Activated CD4-positive, alpha-beta memory T cell treated with anti-CD3 and anti-CD28 coated beads for 36 hours (primary cell): ENCODE measurements at regions of chr10 and their contacts with region 1.

Region 1: GRCh38 chr10:95430231-95430951 is 130.8 kb downstream of the SORBS1 start:
- DNase-seq: peak; percentile 58
- H3K4me3 Mint-ChIP-seq: no peak overlapping the region
- H3K27ac Mint-ChIP-seq: no peak overlapping the region
- H3K4me1 Mint-ChIP-seq: no peaks in the 10 kb centered on the region
- H3K27me3 Mint-ChIP-seq: no peaks in the 10 kb centered on the region

Region 2: GRCh38 chr10:95260397-95260881 is 170.0 kb before region 1 on chr10:
- CTCF ChIA-PET with region 1: no interaction called
- POLR2A ChIA-PET with region 1: no interaction called
- intact Hi-C with region 1: no loop called
- DNase-seq: no peak
- H3K4me3 Mint-ChIP-seq: no peak overlapping the region
- H3K27ac Mint-ChIP-seq: no peak overlapping the region
- H3K4me1 Mint-ChIP-seq: no peaks in the 10 kb centered on the region
- H3K27me3 Mint-ChIP-seq: no peaks in the 10 kb centered on the region

Region 3: DNA sequence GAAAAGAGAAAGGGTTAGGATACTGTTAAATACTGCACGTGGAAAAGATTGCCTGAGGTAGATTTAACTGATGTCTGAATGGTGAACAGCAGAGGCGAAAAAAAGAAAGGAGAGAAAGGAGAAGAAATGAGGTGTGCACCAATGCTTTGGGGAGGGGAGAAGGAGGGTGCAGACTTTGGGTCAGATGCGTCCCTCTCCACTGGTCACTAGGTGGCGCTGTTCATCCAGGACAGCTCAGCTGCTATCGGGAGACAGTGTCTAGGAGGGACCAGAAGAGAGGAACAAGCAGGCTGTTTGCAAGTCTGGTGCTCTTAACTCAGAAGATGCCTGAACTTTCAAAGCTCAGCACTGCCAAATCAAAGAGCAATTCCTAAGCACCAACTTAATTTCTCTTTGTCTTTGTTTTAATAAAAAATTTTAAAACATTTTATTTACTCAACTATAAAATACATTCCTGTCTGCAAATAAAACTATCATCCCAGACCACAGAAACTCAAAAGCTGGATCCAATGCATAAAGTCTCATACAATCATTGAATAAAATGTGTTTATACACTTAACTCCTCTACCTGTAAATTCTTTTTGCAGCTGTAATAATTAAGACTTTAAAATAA is 55.7 kb before region 1 on chr10:
- CTCF ChIA-PET with region 1: interaction called, 73 read pairs
- POLR2A ChIA-PET with region 1: no interaction called
- intact Hi-C with region 1: loop called (anchors 5 kb)
- DNase-seq: peak; percentile 81
- H3K4me3 Mint-ChIP-seq: no peak overlapping the region
- H3K27ac Mint-ChIP-seq: no peak overlapping the region
- H3K4me1 Mint-ChIP-seq: peaks cover 9% of the 10 kb centered on the region
- H3K27me3 Mint-ChIP-seq: peaks cover 14% of the 10 kb centered on the region

Region 4: DNA sequence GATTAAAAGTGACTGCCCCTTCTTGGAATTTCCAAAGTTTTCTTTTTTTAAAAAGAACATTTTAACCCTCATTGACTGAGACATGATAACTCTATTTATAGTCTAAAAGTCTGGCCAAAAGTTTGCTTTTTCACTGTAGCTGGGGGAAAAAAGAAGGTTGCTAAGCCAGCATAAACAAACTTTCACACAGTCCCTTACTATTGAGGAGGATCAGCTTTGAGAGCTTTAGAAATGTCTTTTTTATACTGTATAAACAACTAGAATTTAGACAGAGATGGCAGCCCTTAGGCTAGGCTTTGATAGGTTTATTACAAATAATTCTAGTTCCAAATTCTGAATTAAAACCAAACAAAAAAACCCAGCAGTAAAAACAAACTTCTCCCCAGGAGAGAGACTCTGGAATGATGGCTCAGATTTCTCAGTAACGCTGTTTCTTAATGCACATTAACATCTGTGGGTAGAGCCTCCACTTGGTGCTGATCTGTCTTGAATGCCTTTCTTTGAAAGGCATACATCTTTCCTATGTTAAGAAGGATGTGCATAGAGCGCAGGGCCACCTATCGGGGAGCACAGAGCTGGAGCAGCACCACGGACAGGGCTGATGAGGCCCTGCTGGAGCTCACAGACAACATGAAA is 38.7 kb before region 1 on chr10:
- CTCF ChIA-PET with region 1: interaction called, 12 read pairs
- POLR2A ChIA-PET with region 1: no interaction called
- intact Hi-C with region 1: no loop called
- DNase-seq: peak; percentile 24
- H3K4me3 Mint-ChIP-seq: no peak overlapping the region
- H3K27ac Mint-ChIP-seq: no peak overlapping the region
- H3K4me1 Mint-ChIP-seq: peaks cover 11% of the 10 kb centered on the region
- H3K27me3 Mint-ChIP-seq: no peaks in the 10 kb centered on the region

Region 5: DNA sequence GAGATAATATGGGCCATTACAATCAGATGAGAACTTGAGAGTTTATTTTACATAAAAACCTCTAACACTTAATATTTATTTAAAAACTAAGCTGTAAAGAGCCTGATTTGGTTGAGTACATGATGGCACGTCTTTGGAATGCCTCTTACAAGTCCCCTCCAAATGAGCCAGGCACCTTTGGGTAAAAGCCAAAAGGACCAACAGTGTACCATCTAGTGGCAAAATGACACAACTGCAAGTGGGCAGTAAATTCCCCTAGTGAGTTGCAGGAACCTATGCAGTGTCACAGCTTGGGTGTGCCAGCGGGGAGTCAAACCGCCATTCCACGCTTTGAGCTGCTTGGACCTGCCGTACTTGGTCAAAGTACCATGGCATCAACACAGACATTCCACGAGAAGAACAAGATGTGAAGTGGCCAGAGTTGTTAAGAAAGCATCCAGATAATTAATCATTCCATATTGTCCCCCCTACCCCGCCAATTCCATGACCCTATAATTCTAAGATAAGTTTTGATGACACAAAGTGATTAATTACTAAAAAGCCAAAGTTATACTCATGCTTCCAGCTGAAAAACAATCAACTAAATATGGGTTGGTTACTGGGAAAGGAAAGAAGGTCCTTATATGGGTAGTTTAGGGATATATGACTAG is 15.6 kb after region 1 on chr10:
- CTCF ChIA-PET with region 1: interaction called, 83 read pairs
- POLR2A ChIA-PET with region 1: no interaction called
- intact Hi-C with region 1: no loop called
- DNase-seq: peak; percentile 34
- H3K4me3 Mint-ChIP-seq: no peak overlapping the region
- H3K27ac Mint-ChIP-seq: no peak overlapping the region
- H3K4me1 Mint-ChIP-seq: peaks cover 6% of the 10 kb centered on the region
- H3K27me3 Mint-ChIP-seq: peaks cover 5% of the 10 kb centered on the region

Region 6: DNA sequence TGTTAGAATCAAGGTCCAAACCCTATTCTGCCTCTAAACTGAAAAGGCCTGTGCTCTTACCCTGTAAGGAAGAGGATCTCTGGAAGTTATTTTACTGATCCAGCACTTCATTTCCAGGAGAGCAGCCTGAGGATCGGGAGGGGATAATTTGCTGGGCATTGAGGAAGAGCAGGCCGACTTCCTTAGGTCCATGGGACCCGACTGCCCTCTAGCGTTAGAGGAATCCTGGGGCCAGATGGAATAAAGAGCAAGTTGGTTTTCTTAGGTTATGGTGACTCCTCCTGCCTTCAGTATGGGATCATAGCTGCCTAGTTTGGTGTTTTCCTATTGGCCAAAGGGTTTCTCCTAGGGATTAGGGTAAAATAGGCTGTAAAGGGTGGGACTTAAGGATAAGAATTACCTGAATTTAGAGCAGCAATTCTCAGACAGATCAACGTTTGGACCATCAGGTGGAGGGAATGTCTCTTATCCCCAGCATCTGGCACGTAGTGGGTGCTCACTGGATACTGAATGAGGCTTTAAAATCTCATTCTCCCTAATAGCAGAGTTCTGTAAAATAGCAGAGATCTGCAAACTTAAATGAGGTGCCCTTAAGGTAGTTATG is 170.8 kb after region 1 on chr10:
- CTCF ChIA-PET with region 1: interaction called, 132 read pairs
- POLR2A ChIA-PET with region 1: no interaction called
- intact Hi-C with region 1: loop called (anchors 1 kb)
- DNase-seq: peak; percentile 66
- H3K4me3 Mint-ChIP-seq: no peak overlapping the region
- H3K27ac Mint-ChIP-seq: no peak overlapping the region
- H3K4me1 Mint-ChIP-seq: no peaks in the 10 kb centered on the region
- H3K27me3 Mint-ChIP-seq: peaks cover 4% of the 10 kb centered on the region